Activated naive CD4-positive, alpha-beta T cell treated with anti-CD3 and anti-CD28 coated beads for 36 hours (primary cell): ENCODE measurements at regions of chr1 and their contacts with region 1.

Region 1: DNA sequence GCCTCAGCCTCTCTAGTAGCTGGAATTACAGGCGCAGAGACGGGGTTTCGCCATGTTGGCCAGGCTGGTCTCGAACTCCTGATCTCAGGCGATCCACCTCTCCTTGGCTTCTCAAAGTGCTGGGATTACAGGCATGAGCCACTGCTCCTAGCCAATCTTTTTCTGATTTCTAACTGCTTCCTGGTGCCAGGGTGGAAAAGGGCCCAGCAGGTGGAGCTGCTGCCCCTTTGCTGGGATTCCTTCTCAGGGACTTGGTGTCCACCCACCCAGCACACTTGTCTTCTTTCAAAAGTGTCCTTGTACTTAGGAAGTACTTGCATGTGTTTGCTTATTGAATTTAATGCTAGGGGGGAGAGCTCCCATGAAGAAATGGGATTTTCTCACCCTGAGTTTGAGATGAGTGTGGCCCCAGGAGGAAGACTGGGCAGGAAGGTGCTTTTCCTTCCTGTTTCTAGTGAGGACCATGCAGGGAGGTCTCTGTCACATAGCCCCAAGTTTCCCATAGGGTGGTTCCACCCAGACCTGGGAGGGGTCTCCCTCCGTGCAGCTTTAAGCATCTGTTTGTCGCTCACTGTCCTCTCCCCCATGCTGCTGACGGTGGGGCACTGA is 14.2 kb downstream of the UTP11 start:
- DNase-seq: peak; percentile 80
- H3K4me3 Mint-ChIP-seq: no peak overlapping the region
- H3K27ac Mint-ChIP-seq: no peak overlapping the region
- H3K4me1 Mint-ChIP-seq: peaks cover 52% of the 10 kb centered on the region
- H3K27me3 Mint-ChIP-seq: no peaks in the 10 kb centered on the region

Region 2: DNA sequence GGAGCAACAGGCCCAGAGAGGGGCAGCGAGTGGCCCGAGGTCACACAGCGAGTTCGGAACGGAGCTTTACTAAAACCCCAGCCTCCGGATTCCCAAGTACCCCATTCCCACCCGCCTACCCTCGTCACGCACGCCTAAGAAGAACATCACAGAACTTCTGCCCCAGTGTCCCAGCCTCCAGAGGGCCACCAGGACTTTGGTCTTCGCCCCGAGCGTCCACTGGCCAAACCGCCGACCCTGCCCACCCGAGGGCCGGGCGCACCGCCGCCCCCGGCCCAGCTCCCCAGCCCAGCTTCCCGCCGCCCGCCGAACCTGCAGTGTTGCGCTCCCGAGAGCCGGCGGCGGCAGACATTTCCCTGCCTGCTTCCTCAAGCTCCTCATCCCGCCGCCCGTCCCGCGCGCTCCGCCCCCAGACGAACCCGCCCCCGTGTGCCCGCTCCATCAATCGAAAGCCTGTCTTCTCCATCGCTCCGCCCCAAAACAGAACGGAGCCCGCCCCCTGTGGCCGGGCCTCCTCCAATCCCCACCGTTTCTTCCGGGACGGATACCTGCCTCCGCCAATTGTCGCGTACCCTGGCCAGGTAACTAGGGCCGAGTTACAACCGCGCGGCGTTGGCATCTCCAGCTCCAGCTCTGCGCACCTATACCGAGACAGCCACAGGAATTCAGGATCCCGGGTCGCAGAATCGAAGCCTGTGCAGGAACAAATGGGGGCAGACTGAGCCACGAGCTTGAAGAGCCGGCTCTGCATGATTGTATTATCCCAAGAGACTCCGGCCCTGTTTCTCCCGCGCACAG is 95.1 kb before region 1 on chr1:
- CTCF ChIA-PET with region 1: no interaction called
- intact Hi-C with region 1: loop called (anchors 5 kb)
- DNase-seq: peak; percentile 99
- H3K4me3 Mint-ChIP-seq: peak overlapping the region; percentile 93
- H3K27ac Mint-ChIP-seq: peak overlapping the region; percentile 65
- H3K4me1 Mint-ChIP-seq: peaks cover 46% of the 10 kb centered on the region
- H3K27me3 Mint-ChIP-seq: no peaks in the 10 kb centered on the region

Region 3: DNA sequence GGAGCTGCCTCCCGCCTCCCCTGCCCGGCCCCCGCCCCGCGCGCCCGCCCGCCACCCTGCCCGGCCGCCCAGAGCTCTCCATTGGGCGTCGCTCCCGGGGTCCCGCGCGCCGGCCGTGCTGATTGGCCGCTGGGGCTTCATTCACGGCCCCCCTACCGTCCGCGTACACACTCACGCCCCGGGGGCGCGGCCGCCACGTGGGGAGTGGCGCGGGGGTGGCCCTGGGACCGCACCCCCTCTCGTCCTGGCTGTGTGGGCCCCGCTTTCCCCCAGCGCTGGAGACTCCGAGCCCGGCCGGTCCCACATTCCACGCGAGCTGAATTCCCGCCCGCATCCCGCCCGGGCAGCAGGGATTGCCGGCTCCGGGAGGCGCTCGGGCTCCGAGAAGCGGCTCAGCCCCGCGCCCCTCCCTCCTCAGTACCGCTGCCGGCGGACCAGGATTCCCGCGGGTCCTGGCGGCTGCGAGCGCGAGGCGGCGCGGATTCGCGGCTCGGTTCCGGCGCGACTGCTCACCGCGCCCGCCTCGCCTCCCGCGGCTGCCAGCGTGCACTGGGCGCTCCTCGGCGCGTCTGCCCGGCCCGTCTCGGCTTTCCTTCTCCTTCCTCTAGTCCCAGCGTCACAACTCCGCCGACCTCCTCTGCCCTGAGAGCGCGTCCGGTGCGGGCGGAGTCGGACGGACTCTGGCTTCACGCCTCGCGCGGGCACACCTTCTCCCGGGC is 20.3 kb after region 1 on chr1:
- CTCF ChIA-PET with region 1: interaction called, 8 read pairs
- intact Hi-C with region 1: loop called (anchors 2 kb)
- DNase-seq: no peak
- H3K4me3 Mint-ChIP-seq: peak overlapping the region; percentile 65
- H3K27ac Mint-ChIP-seq: no peak overlapping the region
- H3K4me1 Mint-ChIP-seq: peaks cover 9% of the 10 kb centered on the region
- H3K27me3 Mint-ChIP-seq: peaks cover 43% of the 10 kb centered on the region

Region 4: DNA sequence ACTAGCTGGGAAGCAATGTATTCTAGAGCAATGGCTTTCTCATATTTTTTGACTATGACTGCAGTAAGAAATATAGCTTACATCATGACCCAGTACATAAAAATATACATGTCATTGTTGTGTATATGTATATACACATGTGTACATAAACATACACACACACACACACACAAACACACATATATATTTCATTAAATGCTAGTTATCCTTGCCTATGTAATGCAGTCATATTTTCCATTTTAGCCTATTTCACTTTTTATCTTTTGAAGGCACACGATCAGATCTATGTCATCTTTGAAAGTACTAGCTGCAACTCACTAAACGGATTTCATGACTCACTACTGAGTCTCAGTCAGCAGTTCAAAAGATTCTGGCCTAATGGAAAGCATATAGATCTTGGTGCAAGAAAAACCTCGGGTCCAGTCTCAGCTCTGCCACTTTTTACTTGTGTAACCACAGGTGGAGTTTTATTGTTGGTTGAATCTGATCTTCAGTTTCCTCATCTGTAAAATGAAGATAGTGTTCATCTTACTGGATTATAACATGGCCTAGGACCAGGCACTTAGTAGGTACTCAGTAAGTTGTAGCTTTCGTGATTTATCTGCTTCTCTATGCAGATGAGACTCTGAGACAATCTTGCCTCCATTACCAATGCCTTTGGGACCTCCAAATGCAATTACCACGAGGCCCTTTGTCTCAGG is 507.2 kb after region 1 on chr1:
- CTCF ChIA-PET with region 1: no interaction called
- intact Hi-C with region 1: loop called (anchors 1 kb)
- DNase-seq: peak; percentile 48
- H3K4me3 Mint-ChIP-seq: no peak overlapping the region
- H3K27ac Mint-ChIP-seq: peak overlapping the region; percentile 53
- H3K4me1 Mint-ChIP-seq: peaks cover 19% of the 10 kb centered on the region
- H3K27me3 Mint-ChIP-seq: peaks cover 2% of the 10 kb centered on the region

Region 5: GRCh38 chr1:38818175-38818976 is 791.7 kb after region 1 on chr1:
- CTCF ChIA-PET with region 1: no interaction called
- intact Hi-C with region 1: loop called (anchors 5 kb)
- DNase-seq: peak; percentile 33
- H3K4me3 Mint-ChIP-seq: no peak overlapping the region
- H3K27ac Mint-ChIP-seq: no peak overlapping the region
- H3K4me1 Mint-ChIP-seq: peaks cover 9% of the 10 kb centered on the region
- H3K27me3 Mint-ChIP-seq: peaks cover 52% of the 10 kb centered on the region

Region 6: GRCh38 chr1:39183503-39184353 is 1157.0 kb after region 1 on chr1:
- CTCF ChIA-PET with region 1: no interaction called
- intact Hi-C with region 1: loop called (anchors 10 kb)
- DNase-seq: peak; percentile 94
- H3K4me3 Mint-ChIP-seq: peak overlapping the region; percentile 31
- H3K27ac Mint-ChIP-seq: peak overlapping the region; percentile 93
- H3K4me1 Mint-ChIP-seq: peaks cover 50% of the 10 kb centered on the region
- H3K27me3 Mint-ChIP-seq: no peaks in the 10 kb centered on the region